ENCODE measurements at regions of chr7 and their contacts with region 1.

Region 1: DNA sequence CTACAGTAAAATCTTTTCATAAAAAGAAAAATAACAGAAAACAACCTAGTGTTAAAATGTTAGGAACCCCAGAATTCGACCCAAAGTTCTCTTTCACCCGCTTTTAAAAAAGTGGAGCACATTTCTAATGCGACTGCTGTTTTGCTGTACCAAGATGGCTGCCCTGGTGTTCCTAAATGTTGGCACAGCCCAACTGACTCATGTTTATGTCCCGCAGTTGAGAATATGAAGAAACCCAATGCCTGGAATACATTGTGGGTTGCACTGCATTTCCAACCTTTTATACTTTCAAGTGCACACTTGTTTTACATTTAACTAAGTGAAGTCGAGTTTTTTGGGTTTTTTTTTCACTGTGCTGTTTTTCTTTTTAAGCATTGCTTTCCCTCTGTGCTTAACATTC is 944 bp downstream of the STEAP1B start:
- DNase-seq: no peak
- ATAC-seq: no peak
- H3K4me3 ChIP-seq: no peak overlapping the region
- H3K27ac ChIP-seq: no peak overlapping the region
- H3K4me1 ChIP-seq: peaks cover 14% of the 10 kb centered on the region
- H3K27me3 ChIP-seq: no peaks in the 10 kb centered on the region
- CTCF ChIP-seq: no peak

Region 2: GRCh38 chr7:21984042-21984441 is 515.0 kb before region 1 on chr7:
- CTCF ChIA-PET with region 1: no interaction called
- POLR2A ChIA-PET with region 1: no interaction called
- intact Hi-C with region 1: no loop called
- DNase-seq: no peak
- ATAC-seq: peak; percentile 42
- H3K4me3 ChIP-seq: no peak overlapping the region
- H3K27ac ChIP-seq: no peak overlapping the region
- H3K4me1 ChIP-seq: no peaks in the 10 kb centered on the region
- H3K27me3 ChIP-seq: no peaks in the 10 kb centered on the region
- CTCF ChIP-seq: no peak

Region 3: GRCh38 chr7:22103255-22103969 is 395.6 kb before region 1 on chr7:
- CTCF ChIA-PET with region 1: no interaction called
- POLR2A ChIA-PET with region 1: no interaction called
- intact Hi-C with region 1: loop called (anchors 2 kb)
- DNase-seq: peak; percentile 94
- ATAC-seq: peak; percentile 100
- H3K4me3 ChIP-seq: peak overlapping the region; percentile 39; the same call in 1 of the 2 replicates
- H3K27ac ChIP-seq: no peak overlapping the region
- H3K4me1 ChIP-seq: peaks cover 6% of the 10 kb centered on the region
- H3K27me3 ChIP-seq: no peaks in the 10 kb centered on the region
- CTCF ChIP-seq: peak; percentile 85